A673 (cell line): ENCODE measurements at regions of chr6 and their contacts with region 1.

Region 1: GRCh38 chr6:158819213-158819909 is at the start of gene EZR:
- DNase-seq: peak; percentile 88
- H3K4me3 ChIP-seq: peak within 1 kb of the TSS; percentile 89
- H3K27ac ChIP-seq: peak within 1 kb of the TSS; percentile 86
- H3K4me1 ChIP-seq: peaks cover 27% of the 10 kb centered on the region
- H3K27me3 ChIP-seq: no peaks in the 10 kb centered on the region
- CTCF ChIP-seq: no peak
- total RNA-seq, gene EZR: 144 and 146 TPM in 2 replicates

Region 2: GRCh38 chr6:158595223-158595622 is 224.1 kb before region 1 on chr6:
- CTCF ChIA-PET with region 1: no interaction called
- POLR2A ChIA-PET with region 1: no interaction called
- intact Hi-C with region 1: no loop called
- DNase-seq: no peak
- H3K4me3 ChIP-seq: no peak overlapping the region
- H3K27ac ChIP-seq: no peak overlapping the region
- H3K4me1 ChIP-seq: no peaks in the 10 kb centered on the region
- H3K27me3 ChIP-seq: no peaks in the 10 kb centered on the region
- CTCF ChIP-seq: 0 out of 2 replicates have a peak, but pooled peaks have one; percentile 13

Region 3: DNA sequence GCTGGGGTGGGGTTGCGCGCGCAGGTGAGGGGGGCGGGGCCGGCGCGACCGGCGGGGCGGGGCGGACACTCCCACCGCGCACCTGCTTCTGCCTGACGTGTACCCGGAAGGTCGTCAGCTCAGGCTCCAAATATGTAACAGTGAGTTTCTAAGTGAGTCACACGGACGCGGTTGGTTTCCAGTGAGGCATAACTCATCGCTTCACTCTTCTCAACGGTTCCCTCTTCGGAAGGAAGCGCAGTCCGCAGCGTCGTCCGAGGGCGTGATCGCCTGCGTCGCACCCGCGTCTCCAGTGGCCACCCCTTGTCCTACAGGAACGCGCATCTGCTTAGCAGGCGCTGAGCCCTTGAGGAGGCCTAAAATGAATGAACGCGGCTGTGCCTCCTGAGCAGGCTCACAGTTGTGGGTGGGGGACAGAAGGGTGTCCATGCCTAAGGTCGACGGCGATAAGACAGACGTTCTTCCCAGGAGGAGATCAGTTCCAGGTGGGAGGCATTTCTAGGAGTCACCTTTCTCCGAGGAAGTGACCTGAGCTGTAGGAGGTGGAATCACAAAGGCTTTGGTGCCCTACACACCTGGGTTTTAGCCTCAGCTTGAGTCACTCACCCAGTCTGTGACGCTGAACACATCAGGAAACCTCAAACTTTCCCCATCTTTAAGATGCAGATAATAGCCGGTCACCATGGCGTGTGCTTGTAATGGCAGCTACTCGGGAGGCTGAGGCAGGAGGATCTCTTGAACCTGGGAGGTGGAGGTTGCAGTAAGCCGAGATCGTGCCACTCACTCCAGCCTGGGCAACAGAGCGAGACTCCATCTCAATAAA is 50.7 kb after region 1 on chr6:
- CTCF ChIA-PET with region 1: no interaction called
- POLR2A ChIA-PET with region 1: interaction called, 3 read pairs
- intact Hi-C with region 1: loop called (anchors 2 kb)
- DNase-seq: no peak
- H3K4me3 ChIP-seq: peak overlapping the region; percentile 49
- H3K27ac ChIP-seq: peak overlapping the region; percentile 97
- H3K4me1 ChIP-seq: peaks cover 7% of the 10 kb centered on the region
- H3K27me3 ChIP-seq: no peaks in the 10 kb centered on the region
- CTCF ChIP-seq: no peak

Region 4: GRCh38 chr6:159042003-159042825 is 222.9 kb after region 1 on chr6:
- CTCF ChIA-PET with region 1: no interaction called
- POLR2A ChIA-PET with region 1: no interaction called
- intact Hi-C with region 1: no loop called
- DNase-seq: peak; percentile 59
- H3K4me3 ChIP-seq: no peak overlapping the region
- H3K27ac ChIP-seq: no peak overlapping the region
- H3K4me1 ChIP-seq: no peaks in the 10 kb centered on the region
- H3K27me3 ChIP-seq: no peaks in the 10 kb centered on the region
- CTCF ChIP-seq: peak; percentile 99

Region 5: GRCh38 chr6:159193923-159194322 is 374.6 kb after region 1 on chr6:
- CTCF ChIA-PET with region 1: no interaction called
- POLR2A ChIA-PET with region 1: no interaction called
- intact Hi-C with region 1: no loop called
- DNase-seq: no peak
- H3K4me3 ChIP-seq: no peak overlapping the region
- H3K27ac ChIP-seq: no peak overlapping the region
- H3K4me1 ChIP-seq: no peaks in the 10 kb centered on the region
- H3K27me3 ChIP-seq: peaks cover 30% of the 10 kb centered on the region
- CTCF ChIP-seq: no peak